Left ventricle myocardium inferior (tissue), 1 donor: ENCODE measurements at regions of chr9 and their contacts with region 1.

Region 1: GRCh38 chr9:81529556-81530195 is 159.7 kb downstream of the TLE1 start:
- DNase-seq: no peak
- H3K4me3 ChIP-seq: no peak overlapping the region
- H3K27ac ChIP-seq: no peak overlapping the region
- H3K4me1 ChIP-seq: peaks cover 10% of the 10 kb centered on the region
- H3K27me3 ChIP-seq: no peaks in the 10 kb centered on the region
- CTCF ChIP-seq: no peak

Region 2: GRCh38 chr9:81689343-81690190 is 159.9 kb after region 1 on chr9 and contains the start of gene TLE1:
- intact Hi-C with region 1: loop called (anchors 5 kb)
- DNase-seq: peak; percentile 99
- H3K4me3 ChIP-seq: peak within 1 kb of the TSS; percentile 85
- H3K27ac ChIP-seq: peak within 1 kb of the TSS; percentile 89
- H3K4me1 ChIP-seq: peaks cover 55% of the 10 kb centered on the region
- H3K27me3 ChIP-seq: peaks cover 30% of the 10 kb centered on the region
- CTCF ChIP-seq: no peak
- total RNA-seq, gene TLE1: 8.5 TPM

Region 3: DNA sequence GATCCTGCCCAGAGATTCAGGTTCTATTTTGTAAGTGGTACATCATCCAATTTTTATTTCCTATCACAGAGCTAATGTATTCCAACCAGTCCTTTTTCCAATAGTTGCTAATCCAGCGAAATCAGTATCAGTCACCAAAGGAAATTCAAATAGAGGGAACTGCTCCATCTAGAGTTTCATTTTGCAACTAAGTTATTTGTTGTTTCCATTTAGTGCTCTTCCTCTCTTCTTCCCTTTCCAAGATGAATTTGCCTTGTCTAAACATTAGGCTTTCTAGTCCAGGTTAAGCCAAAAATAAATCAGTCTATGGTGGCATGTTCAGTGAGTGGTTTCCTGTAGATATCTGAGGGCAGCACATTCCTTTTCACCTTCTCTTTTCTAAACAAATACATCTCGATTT is 318.8 kb after region 1 on chr9:
- intact Hi-C with region 1: loop called (anchors 10 kb)
- DNase-seq: no peak
- H3K4me3 ChIP-seq: no peak overlapping the region
- H3K27ac ChIP-seq: no peak overlapping the region
- H3K4me1 ChIP-seq: peaks cover 16% of the 10 kb centered on the region
- H3K27me3 ChIP-seq: peaks cover 7% of the 10 kb centered on the region
- CTCF ChIP-seq: peak; percentile 53